Activated T-helper 2 cell treated with anti-CD3 and anti-CD28 coated beads, Interferon-gamma antibody, Interleukin-2, Interleukin-4, amounts not matched to agents 10 μg/mL and 5 μg/mL and 100 μg/mL, durations not matched to agents 14 hours and 24 hours and 36 hours (primary cell): ENCODE measurements at regions of chr6 and their contacts with region 1.

Region 1: GRCh38 chr6:32816746-32817204 is at the start of gene HLA-DOB:
- DNase-seq: no peak
- H3K4me3 Mint-ChIP-seq: no peak within 1 kb of the TSS
- H3K27ac Mint-ChIP-seq: no peak within 1 kb of the TSS
- H3K4me1 Mint-ChIP-seq: peaks cover 6% of the 10 kb centered on the region
- H3K27me3 Mint-ChIP-seq: no peaks in the 10 kb centered on the region
- total RNA-seq, gene HLA-DOB: 3.1 and 3.6 TPM in 2 replicates

Region 2: GRCh38 chr6:32868257-32868788 is 51.5 kb after region 1 on chr6:
- intact Hi-C with region 1: loop called (anchors 10 kb)
- DNase-seq: peak; percentile 76
- H3K4me3 Mint-ChIP-seq: no peak overlapping the region
- H3K27ac Mint-ChIP-seq: no peak overlapping the region
- H3K4me1 Mint-ChIP-seq: peaks cover 40% of the 10 kb centered on the region
- H3K27me3 Mint-ChIP-seq: no peaks in the 10 kb centered on the region